A549 (cell line): ENCODE measurements at regions of chr22 and their contacts with region 1.

Region 1: DNA sequence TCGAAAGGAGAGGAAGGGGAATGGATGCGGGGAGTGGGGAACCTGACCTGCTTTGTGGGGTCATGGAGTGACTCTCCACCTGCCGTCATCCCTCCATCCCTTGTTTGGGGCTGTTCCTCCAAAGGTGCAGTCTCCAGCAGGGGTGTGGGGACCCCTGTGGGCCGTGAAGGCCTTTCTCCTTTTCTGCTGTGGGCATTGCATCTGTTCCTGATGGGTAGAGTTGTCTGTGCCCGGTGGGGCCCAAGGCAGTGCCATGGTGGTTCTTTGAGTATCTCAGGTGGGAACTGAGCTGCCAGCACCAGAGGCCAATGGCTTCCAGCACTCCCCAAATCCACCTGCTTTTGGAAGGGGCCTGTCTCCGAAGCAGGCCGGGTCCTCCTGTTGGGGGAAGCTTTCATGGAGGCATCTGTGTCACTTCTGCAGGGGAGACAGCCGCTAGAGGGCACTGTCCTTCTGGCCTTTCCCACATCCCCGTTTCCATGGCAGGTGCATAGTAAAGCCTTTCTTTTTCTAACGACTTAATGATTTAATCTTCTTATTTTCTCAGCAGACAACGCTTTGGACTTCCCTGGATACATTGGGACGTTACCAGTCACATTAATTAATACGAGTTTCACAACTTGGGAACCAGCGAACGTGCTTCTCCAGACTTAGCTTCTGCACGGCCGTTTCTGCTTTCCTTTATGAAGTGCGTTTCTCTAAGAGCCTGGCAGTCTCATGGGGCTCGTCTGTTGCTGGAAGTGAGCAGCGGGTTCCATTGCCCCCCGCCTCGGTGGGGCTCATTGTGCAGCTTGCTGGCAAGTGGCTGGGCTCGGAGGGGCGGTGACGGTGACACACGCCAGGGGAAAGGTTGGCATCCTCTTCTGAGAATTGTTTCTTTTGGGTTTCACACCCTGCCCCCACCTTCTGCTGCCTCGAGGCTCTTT is 57.1 kb downstream of the PARVB start:
- DNase-seq: peak; percentile 54 to 73
- ATAC-seq: peak in 1 of 2 experiments; percentile 85; a peak in 3 of 6 replicates
- H3K4me3 ChIP-seq: no peak overlapping the region
- H3K27ac ChIP-seq: no peak overlapping the region
- H3K4me1 ChIP-seq: no peaks in the 10 kb centered on the region
- CTCF ChIP-seq: peak; percentile 68
- EP300 ChIP-seq: no peak
- POLR2A ChIP-seq: no peak
- RAD21 ChIP-seq: peak; percentile 62 to 70

Region 2: GRCh38 chr22:44033694-44034093 is 47.5 kb before region 1 on chr22:
- CTCF ChIA-PET with region 1: interaction called, 13 read pairs
- POLR2A ChIA-PET with region 1: no interaction called
- DNase-seq: no peak
- ATAC-seq: no peak
- H3K4me3 ChIP-seq: no peak overlapping the region
- H3K27ac ChIP-seq: no peak overlapping the region
- H3K4me1 ChIP-seq: peaks cover 38% of the 10 kb centered on the region
- CTCF ChIP-seq: no peak
- EP300 ChIP-seq: no peak
- POLR2A ChIP-seq: no peak
- RAD21 ChIP-seq: no peak

Region 3: DNA sequence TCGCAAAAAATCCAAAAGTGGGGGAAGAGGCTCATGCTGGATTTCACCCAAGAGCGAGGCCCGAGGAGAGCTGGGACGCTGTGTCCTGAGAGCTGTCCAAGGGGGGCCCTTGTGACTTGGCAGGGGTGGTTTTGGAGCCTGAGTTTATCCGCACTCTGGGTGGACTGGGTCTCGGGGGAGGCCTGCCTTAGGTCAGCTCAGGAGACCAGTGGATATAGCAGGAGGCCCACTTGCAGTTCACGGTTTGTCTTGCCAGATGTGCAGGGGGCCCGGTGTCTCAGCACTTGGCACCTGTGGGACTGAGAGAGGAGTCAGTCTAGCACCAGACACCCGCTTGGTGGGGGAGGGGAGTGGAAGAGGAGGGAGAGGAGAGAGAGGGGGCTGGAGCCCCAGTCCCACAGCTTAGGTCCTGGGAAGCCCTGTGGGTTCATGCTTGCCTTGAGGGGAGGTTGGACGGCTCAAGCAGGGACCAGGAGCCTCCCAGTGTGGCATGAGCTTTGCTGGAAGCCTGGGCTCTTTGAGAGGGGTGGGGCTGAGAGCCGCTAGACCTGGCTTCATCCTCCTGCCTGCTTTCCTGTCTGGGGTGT is 23.7 kb before region 1 on chr22:
- CTCF ChIA-PET with region 1: interaction called, 11 read pairs
- POLR2A ChIA-PET with region 1: no interaction called
- DNase-seq: no peak
- ATAC-seq: no peak
- H3K4me3 ChIP-seq: no peak overlapping the region
- H3K27ac ChIP-seq: peak overlapping the region; percentile 61 to 84; a peak in 5 of 6 replicates
- H3K4me1 ChIP-seq: peaks cover 28% of the 10 kb centered on the region
- CTCF ChIP-seq: no peak
- EP300 ChIP-seq: no peak
- POLR2A ChIP-seq: no peak
- RAD21 ChIP-seq: no peak

Region 4: GRCh38 chr22:44098083-44098739 is 17.0 kb after region 1 on chr22:
- CTCF ChIA-PET with region 1: interaction called, 18 read pairs
- POLR2A ChIA-PET with region 1: no interaction called
- DNase-seq: no peak
- ATAC-seq: no peak
- H3K4me3 ChIP-seq: no peak overlapping the region
- H3K27ac ChIP-seq: no peak overlapping the region
- H3K4me1 ChIP-seq: no peaks in the 10 kb centered on the region
- CTCF ChIP-seq: no peak
- EP300 ChIP-seq: no peak
- POLR2A ChIP-seq: no peak
- RAD21 ChIP-seq: no peak

Region 5: GRCh38 chr22:44172370-44173108 is 91.3 kb after region 1 on chr22:
- CTCF ChIA-PET with region 1: no interaction called
- POLR2A ChIA-PET with region 1: no interaction called
- DNase-seq: no peak
- ATAC-seq: no peak
- H3K4me3 ChIP-seq: no peak overlapping the region
- H3K27ac ChIP-seq: no peak overlapping the region
- H3K4me1 ChIP-seq: no peaks in the 10 kb centered on the region
- CTCF ChIP-seq: no peak
- EP300 ChIP-seq: no peak
- POLR2A ChIP-seq: no peak
- RAD21 ChIP-seq: no peak

Region 6: DNA sequence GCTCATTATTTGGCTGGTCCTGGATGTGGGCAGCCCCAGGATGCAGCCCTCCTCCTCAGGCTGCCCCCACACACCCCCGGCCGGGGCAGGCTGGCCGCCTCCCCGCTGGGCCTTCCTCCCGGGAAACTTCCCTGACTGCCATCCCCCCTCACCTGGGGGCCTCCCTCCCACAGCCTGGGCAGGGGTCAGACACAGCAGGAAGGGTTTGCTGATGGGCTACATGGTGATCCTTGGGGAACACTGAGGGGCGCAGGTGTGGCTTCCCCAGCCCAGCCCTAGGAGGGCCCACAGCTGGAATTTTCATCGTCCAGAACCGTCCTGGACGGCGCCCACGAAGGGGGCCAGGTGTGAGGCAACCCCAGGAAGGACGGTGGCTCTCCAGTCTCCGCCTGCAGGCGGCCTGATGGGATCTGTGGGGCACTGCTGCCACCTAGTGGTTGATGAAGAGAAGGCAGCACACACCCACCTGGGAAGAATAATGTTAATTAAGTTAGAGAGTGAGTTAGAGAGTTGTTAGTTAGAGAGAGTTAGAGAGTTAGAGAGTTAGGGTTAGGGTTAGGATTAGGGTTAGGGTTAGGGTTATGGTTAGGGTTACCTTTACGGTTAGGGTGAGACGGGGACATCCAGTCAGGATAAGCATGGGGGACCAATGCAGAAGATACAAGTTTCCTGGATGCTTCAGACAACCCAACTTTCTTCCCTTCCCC is 544.9 kb after region 1 on chr22:
- CTCF ChIA-PET with region 1: interaction called, 146 read pairs
- POLR2A ChIA-PET with region 1: no interaction called
- DNase-seq: peak; percentile 46 to 55
- ATAC-seq: peak; percentile 65 to 77
- H3K4me3 ChIP-seq: no peak overlapping the region
- H3K27ac ChIP-seq: peak overlapping the region in 1 of 2 experiments; percentile 64; a peak in 3 of 6 replicates
- H3K4me1 ChIP-seq: peaks cover 5% of the 10 kb centered on the region; the same call in 1 of the 3 replicates
- CTCF ChIP-seq: peak; percentile 82
- EP300 ChIP-seq: no peak
- POLR2A ChIP-seq: no peak
- RAD21 ChIP-seq: peak; percentile 94 to 96